Posterior cingulate gyrus (tissue), 11 donors: ENCODE measurements at regions of chr1 and their contacts with region 1.

Region 1: GRCh38 chr1:154324669-154325582 is at the start of gene ATP8B2:
- DNase-seq: peak; percentile 65 to 96 (median 82)

Region 2: GRCh38 chr1:154404984-154405761 is 80.2 kb after region 1 on chr1 and contains the start of gene IL6R:
- intact Hi-C with region 1: loop called (anchors 10 kb)
- DNase-seq: peak; percentile 55 to 96 (median 79)